ENCODE measurements at regions of chr16 and their contacts with region 1.

Region 1: DNA sequence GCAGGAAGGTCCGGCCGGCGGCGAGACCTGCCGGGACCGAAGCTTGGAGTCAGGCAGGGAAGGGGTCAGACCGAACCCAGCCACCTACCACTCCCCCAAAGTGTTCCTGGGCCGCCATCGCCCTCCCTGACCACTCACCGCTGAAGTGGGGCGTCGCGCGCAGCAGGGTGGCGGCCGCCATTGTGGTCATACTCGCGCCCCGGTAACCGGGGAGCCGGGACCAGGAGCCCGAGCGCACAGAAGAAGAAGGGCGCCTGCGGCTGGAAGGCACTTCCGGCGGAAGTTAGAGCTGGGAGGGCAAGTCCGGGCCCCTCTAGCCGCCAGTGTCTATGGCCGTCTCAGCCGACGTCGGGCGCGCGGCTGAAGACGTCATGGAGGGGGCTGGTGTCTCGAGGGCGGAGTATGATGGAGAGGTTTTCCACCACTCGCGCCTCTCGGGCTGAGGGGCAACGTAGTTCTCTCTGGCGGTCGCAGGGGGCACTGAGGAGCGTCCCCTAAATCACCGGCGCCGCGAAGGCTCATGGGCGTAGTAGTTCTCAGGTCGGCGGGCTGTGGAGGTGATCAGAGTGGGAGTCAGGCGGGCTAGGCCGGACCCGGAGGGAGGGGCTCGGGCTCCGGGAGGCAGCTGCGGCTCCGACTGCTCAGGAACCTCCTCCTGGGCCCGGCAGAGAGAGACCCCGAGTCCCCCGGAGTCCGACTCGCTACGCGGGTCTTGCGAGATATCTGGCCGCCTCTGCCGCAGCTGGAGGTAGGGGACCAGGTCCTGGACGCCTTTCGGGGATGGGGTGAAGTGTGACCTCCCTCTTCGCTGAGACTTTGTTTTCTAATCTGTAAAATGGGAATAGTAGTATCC is at the start of gene TUFM:
- DNase-seq: peak; percentile 98 to 99 (median 99)
- H3K4me3 ChIP-seq: peak within 1 kb of the TSS; percentile 86 to 93
- H3K4me3 Mint-ChIP-seq: peak within 1 kb of the TSS; percentile 92 to 100 (median 94)
- H3K27ac ChIP-seq: peak within 1 kb of the TSS; percentile 87
- H3K27ac Mint-ChIP-seq: peak within 1 kb of the TSS; percentile 95 to 99 (median 97)
- H3K4me1 ChIP-seq: peaks cover 22% of the 10 kb centered on the region
- H3K4me1 Mint-ChIP-seq: peaks cover 18 to 35% (median 25%) of the 10 kb centered on the region in 4 donors
- H3K27me3 ChIP-seq: no peaks in the 10 kb centered on the region
- H3K27me3 Mint-ChIP-seq: no peaks in the 10 kb centered on the region
- total RNA-seq, gene TUFM: 98.0 to 108 TPM

Region 2: GRCh38 chr16:28561557-28562187 is 284.6 kb before region 1 on chr16:
- CTCF ChIA-PET with region 1: no interaction called
- POLR2A ChIA-PET with region 1: no interaction called
- intact Hi-C with region 1: no loop called
- DNase-seq: no peak
- H3K4me3 ChIP-seq: no peak overlapping the region
- H3K4me3 Mint-ChIP-seq: no peak overlapping the region
- H3K27ac ChIP-seq: no peak overlapping the region
- H3K27ac Mint-ChIP-seq: peak overlapping the region in 3 of 7 donors; percentile 17 to 53 (median 22)
- H3K4me1 ChIP-seq: peaks cover 5% of the 10 kb centered on the region
- H3K4me1 Mint-ChIP-seq: peaks cover 18 to 49% (median 26%) of the 10 kb centered on the region in 4 donors
- H3K27me3 ChIP-seq: no peaks in the 10 kb centered on the region
- H3K27me3 Mint-ChIP-seq: no peaks in the 10 kb centered on the region

Region 3: DNA sequence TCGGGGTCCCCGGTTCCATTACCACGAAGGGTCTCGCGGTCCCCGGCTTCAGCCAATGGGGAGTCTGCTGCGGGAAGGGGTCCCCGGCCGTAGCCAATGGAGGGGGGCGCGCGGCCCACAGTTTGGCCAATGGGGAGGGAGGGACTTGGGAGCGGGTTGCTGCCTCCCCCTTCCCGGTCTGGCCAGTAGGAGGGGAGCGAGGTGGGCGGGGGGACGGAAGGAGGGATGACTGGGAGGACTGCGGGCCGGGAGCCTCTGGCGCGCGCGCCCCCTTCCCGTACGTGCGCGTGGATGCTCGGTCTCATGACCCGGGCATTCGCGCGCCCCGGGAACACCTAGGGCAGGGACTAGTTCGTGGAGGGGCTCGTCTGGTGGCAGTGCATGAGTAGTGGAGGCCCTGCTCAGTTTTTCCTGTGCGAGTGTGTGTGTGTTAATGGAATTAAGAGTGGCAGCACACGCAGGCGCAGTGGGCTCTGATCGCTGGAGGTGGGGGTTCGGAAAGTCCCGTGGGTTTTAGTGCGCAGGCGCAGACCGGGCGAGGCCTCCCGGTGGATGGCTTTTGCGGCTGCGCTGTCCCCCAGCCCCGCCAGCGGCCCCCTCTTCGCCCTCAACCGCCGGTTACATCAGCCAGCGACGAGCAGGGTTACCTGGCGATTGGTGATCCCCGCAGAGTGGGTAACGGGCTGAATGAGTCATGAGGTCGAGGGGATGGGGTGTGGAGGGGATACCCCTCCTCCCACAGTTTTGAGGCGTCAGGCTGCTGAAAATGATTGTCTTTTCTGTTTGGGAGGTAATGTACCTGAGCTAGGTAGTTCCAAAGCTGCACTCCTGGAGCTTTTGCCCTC is 22.2 kb before region 1 on chr16:
- CTCF ChIA-PET with region 1: interaction called, 8 read pairs
- POLR2A ChIA-PET with region 1: interaction called, 84 read pairs
- intact Hi-C with region 1: loop called (anchors 1 kb)
- DNase-seq: peak; percentile 94 to 99 (median 95)
- H3K4me3 ChIP-seq: peak overlapping the region; percentile 85 to 97
- H3K4me3 Mint-ChIP-seq: peak overlapping the region; percentile 93 to 99 (median 96)
- H3K27ac ChIP-seq: peak overlapping the region; percentile 98
- H3K27ac Mint-ChIP-seq: peak overlapping the region; percentile 96 to 100 (median 98)
- H3K4me1 ChIP-seq: peaks cover 32% of the 10 kb centered on the region
- H3K4me1 Mint-ChIP-seq: peaks cover 27 to 58% (median 40%) of the 10 kb centered on the region in 4 donors
- H3K27me3 ChIP-seq: no peaks in the 10 kb centered on the region
- H3K27me3 Mint-ChIP-seq: peaks cover 0 to 5% of the 10 kb centered on the region in 2 donors

Region 4: DNA sequence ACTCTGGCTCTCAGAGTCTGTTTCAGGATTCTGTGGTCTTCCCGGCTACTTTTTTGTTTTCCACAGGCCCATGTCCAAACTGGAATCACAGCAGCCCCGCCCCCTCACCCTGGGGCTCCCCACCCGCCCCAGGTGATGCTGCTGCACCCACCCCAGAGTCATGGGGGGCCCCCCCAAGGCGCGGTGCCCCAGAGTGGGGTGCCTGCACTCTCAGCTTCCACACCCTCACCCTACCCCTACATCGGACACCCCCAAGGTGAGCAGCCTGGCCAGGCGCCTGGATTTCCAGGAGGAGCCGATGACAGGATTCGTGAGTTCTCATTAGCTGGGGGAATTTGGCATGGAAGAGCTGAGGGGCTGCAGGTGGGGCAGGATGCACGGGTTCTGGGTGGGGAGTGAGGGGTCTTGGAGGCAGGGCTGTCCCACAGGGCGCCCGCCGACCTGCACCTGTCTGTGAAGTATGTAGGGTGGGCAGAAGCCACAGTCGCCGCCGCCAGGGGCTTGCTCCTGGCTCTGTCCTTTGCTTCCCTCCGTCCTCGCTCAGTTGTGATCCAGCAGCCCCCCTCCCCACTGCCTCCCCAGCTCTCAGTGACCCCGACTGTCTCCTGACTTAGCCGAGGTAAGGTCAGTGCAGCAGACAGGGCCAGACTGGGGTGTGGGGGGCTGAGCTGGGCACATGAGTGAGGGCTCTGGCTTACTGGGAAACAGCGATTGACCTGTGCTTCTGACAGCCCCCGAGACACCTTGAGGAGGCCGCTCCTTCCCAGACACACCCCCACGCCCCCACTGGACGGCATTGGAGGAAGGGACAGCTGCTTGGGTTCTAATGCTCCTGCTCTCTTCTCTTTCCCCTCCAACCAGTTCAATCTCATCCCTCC is 10.2 kb before region 1 on chr16:
- CTCF ChIA-PET with region 1: no interaction called
- POLR2A ChIA-PET with region 1: interaction called, 21 read pairs
- intact Hi-C with region 1: no loop called
- DNase-seq: no peak
- H3K4me3 ChIP-seq: no peak overlapping the region
- H3K4me3 Mint-ChIP-seq: no peak overlapping the region
- H3K27ac ChIP-seq: no peak overlapping the region
- H3K27ac Mint-ChIP-seq: no peak overlapping the region
- H3K4me1 ChIP-seq: no peaks in the 10 kb centered on the region
- H3K4me1 Mint-ChIP-seq: peaks cover 0 to 9% (median 4%) of the 10 kb centered on the region in 4 donors
- H3K27me3 ChIP-seq: no peaks in the 10 kb centered on the region
- H3K27me3 Mint-ChIP-seq: no peaks in the 10 kb centered on the region

Region 5: DNA sequence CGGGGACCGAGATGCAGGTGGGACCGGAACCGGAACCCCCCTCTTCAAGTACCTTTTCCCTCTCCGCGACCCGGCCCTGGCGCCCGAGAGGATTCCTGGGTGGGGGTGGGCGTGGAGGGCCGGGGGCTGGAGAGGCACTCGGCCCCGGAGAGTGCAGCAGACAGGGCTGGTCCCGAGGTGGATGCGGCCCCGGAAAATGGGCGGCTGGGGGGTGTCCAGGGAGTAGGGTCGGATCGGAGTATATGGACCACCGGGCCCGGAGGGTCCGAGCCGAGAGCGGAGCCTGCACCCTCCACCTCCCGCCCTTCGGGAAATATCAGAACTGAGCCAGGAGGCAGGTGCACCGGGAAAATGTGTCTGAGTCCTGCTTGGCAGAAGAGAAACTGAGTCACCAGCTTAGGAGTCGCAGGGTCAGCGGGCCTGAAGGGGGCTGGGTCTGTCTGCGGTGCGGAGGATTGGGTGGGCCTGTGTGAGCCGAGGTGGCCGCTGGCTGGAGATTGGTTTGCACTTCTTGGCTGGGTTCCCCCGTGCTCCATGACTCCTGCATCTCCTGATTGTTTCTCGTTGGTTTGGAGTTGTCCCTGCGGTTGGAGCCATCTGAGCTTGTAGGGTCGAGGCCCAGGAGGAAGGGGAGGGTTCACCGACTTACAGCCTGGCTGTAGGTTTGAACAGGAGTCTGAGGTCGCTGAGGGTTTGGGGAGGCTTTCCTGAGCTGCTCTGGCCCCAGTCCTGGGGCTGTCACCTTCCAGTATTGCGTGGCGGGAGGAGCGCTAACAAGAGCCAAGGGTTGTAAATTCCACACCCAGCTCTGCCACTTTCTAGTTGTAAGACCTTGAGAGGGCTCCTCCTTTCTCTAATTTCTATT is 17.9 kb after region 1 on chr16:
- CTCF ChIA-PET with region 1: interaction called, 37 read pairs
- POLR2A ChIA-PET with region 1: interaction called, 149 read pairs
- intact Hi-C with region 1: loop called (anchors 1 kb)
- DNase-seq: peak in 3 of 5 donors; percentile 15 to 62 (median 28)
- H3K4me3 ChIP-seq: peak overlapping the region; percentile 36 to 65
- H3K4me3 Mint-ChIP-seq: peak overlapping the region; percentile 95 to 99 (median 98)
- H3K27ac ChIP-seq: peak overlapping the region; percentile 85
- H3K27ac Mint-ChIP-seq: peak overlapping the region; percentile 95 to 100 (median 98)
- H3K4me1 ChIP-seq: peaks cover 25% of the 10 kb centered on the region
- H3K4me1 Mint-ChIP-seq: peaks cover 16 to 35% (median 22%) of the 10 kb centered on the region in 4 donors
- H3K27me3 ChIP-seq: no peaks in the 10 kb centered on the region
- H3K27me3 Mint-ChIP-seq: no peaks in the 10 kb centered on the region

Region 6: DNA sequence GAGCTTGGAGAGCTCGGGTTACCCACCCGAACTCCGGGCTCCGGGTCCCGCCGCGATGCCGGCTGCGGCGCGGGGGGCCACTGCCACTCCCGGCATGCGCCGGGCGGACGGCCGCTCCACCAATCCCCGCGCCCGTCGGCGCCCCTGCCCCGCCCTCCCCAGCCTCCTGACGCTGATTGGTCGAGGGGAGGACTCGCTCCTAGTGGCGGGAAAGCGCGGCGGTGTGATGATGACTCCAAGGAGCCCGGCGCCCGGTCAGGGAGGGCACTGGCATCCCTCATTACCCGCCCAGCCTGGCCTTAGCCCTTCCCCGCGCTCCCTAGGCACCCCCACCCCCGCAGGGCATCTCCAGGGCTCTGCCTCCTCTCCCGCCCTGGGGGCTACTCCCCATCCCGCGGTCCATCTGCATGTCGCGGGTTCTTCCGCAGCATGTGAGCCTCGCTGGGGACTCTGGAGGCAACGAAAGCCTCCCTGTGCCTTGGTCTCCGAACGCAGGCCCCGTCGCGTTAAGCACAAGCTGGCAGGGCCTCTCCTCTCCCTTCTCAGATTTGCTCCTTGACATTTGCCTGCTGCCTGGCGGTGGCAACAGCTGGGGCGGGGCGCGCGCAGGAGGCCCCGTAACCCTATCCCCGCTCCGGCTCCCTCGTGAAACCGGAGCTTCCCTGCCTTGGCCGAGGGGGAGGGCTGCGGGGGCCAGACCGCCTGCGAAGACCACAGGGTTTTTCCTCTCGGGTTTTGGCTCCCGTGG is 33.7 kb after region 1 on chr16:
- CTCF ChIA-PET with region 1: interaction called, 3 read pairs
- POLR2A ChIA-PET with region 1: interaction called, 6 read pairs
- intact Hi-C with region 1: loop called (anchors 1 kb)
- DNase-seq: peak; percentile 79 to 92 (median 82)
- H3K4me3 ChIP-seq: peak overlapping the region; percentile 49 to 82
- H3K4me3 Mint-ChIP-seq: peak overlapping the region; percentile 88 to 93 (median 90)
- H3K27ac ChIP-seq: peak overlapping the region; percentile 53
- H3K27ac Mint-ChIP-seq: peak overlapping the region in 2 of 7 donors; percentile 66 to 74
- H3K4me1 ChIP-seq: peaks cover 13% of the 10 kb centered on the region
- H3K4me1 Mint-ChIP-seq: peaks cover 3 to 18% (median 11%) of the 10 kb centered on the region in 4 donors
- H3K27me3 ChIP-seq: no peaks in the 10 kb centered on the region
- H3K27me3 Mint-ChIP-seq: peaks cover 0 to 7% of the 10 kb centered on the region in 2 donors

Region 7: DNA sequence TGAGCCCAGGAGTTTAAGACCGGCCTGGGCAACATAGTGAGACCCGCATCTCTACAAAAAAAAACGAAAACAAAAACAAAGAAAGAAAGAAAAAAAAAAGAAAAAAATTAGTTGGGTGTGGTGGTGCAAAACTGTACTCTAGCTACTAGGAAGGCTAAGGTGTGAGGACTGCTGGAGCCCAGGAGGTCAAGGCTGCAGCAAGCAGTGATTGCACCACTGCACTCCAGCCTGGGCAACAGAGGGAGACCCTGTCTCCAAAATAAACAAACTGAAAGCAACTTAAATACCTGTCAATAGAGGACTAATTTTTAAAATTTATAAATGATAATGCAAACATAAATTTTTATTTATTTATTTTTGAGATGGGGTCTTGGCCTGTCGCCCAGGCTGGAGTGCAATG is 49.3 kb after region 1 on chr16:
- CTCF ChIA-PET with region 1: no interaction called
- POLR2A ChIA-PET with region 1: no interaction called
- intact Hi-C with region 1: no loop called
- DNase-seq: no peak
- H3K4me3 ChIP-seq: no peak overlapping the region
- H3K4me3 Mint-ChIP-seq: no peak overlapping the region
- H3K27ac ChIP-seq: no peak overlapping the region
- H3K27ac Mint-ChIP-seq: no peak overlapping the region
- H3K4me1 ChIP-seq: no peaks in the 10 kb centered on the region
- H3K4me1 Mint-ChIP-seq: no peaks in the 10 kb centered on the region
- H3K27me3 ChIP-seq: no peaks in the 10 kb centered on the region
- H3K27me3 Mint-ChIP-seq: no peaks in the 10 kb centered on the region

Region 8: GRCh38 chr16:28943281-28943680 is 97.0 kb after region 1 on chr16:
- CTCF ChIA-PET with region 1: interaction called, 18 read pairs
- POLR2A ChIA-PET with region 1: no interaction called
- intact Hi-C with region 1: loop called (anchors 1 kb)
- DNase-seq: no peak
- H3K4me3 ChIP-seq: no peak overlapping the region
- H3K4me3 Mint-ChIP-seq: no peak overlapping the region
- H3K27ac ChIP-seq: no peak overlapping the region
- H3K27ac Mint-ChIP-seq: peak overlapping the region in 1 of 7 donors; percentile 53
- H3K4me1 ChIP-seq: peaks cover 9% of the 10 kb centered on the region
- H3K4me1 Mint-ChIP-seq: peaks cover 6 to 9% (median 7%) of the 10 kb centered on the region in 4 donors
- H3K27me3 ChIP-seq: no peaks in the 10 kb centered on the region
- H3K27me3 Mint-ChIP-seq: no peaks in the 10 kb centered on the region

Region 9: DNA sequence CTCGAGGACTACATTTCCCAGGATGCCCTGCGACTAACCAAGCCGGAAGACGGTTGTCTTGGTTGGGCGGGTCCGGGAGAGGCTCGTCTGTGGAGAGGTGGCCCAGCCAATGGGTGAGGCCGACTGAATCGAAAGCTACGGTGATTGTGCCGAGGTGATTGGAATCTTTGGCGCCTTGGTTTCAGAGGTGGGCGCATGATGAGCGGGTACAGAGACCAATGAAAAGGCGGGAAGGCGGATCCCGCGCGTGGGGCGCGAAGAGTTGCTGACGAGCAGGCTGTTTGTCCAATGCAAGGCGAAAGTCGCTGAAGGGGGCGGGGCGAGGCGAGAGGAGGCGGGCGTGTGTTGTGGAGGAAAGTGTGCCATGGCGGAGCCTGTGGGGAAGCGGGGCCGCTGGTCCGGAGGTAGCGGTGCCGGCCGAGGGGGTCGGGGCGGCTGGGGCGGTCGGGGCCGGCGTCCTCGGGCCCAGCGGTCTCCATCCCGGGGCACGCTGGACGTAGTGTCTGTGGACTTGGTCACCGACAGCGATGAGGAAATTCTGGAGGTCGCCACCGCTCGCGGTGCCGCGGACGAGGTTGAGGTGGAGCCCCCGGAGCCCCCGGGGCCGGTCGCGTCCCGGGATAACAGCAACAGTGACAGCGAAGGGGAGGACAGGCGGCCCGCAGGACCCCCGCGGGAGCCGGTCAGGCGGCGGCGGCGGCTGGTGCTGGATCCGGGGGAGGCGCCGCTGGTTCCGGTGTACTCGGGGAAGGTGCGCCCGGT is 104.5 kb after region 1 on chr16 and contains the start of gene NFATC2IP:
- CTCF ChIA-PET with region 1: interaction called, 18 read pairs
- POLR2A ChIA-PET with region 1: interaction called, 6 read pairs
- intact Hi-C with region 1: loop called (anchors 1 kb)
- DNase-seq: peak; percentile 99 to 100 (median 100)
- H3K4me3 ChIP-seq: peak within 1 kb of the TSS; percentile 12 to 66
- H3K4me3 Mint-ChIP-seq: peak within 1 kb of the TSS; percentile 93 to 99 (median 96)
- H3K27ac ChIP-seq: peak within 1 kb of the TSS; percentile 70
- H3K27ac Mint-ChIP-seq: peak within 1 kb of the TSS; percentile 68 to 96 (median 93)
- H3K4me1 ChIP-seq: peaks cover 28% of the 10 kb centered on the region
- H3K4me1 Mint-ChIP-seq: peaks cover 14 to 40% (median 29%) of the 10 kb centered on the region in 4 donors
- H3K27me3 ChIP-seq: no peaks in the 10 kb centered on the region
- H3K27me3 Mint-ChIP-seq: no peaks in the 10 kb centered on the region
- total RNA-seq, gene NFATC2IP: 105 to 115 TPM

Measured in CD4-positive, alpha-beta memory T cell (primary cell).